Right cardiac atrium (tissue), 5 donors: ENCODE measurements at regions of chr3 and their contacts with region 1.

Region 1: GRCh38 chr3:53160660-53161449 is at the start of gene PRKCD:
- DNase-seq: peak; percentile 90 to 96 (median 95)
- ATAC-seq: peak; percentile 88 to 90
- H3K4me3 ChIP-seq: peak within 1 kb of the TSS; percentile 68
- H3K27ac ChIP-seq: peak within 1 kb of the TSS; percentile 88
- H3K4me1 ChIP-seq: peaks cover 20% of the 10 kb centered on the region
- H3K27me3 ChIP-seq: no peaks in the 10 kb centered on the region
- total RNA-seq, gene PRKCD: 26.2 to 34.4 (median 31.3) TPM

Region 2: GRCh38 chr3:53114011-53114400 is 46.8 kb before region 1 on chr3:
- intact Hi-C with region 1: loop called in 1 of 4 experiments (anchors 5 kb)
- DNase-seq: peak; percentile 73 to 89 (median 84)
- ATAC-seq: peak; percentile 75 to 85
- H3K4me3 ChIP-seq: no peak overlapping the region
- H3K27ac ChIP-seq: peak overlapping the region; percentile 86
- H3K4me1 ChIP-seq: peaks cover 2% of the 10 kb centered on the region
- H3K27me3 ChIP-seq: no peaks in the 10 kb centered on the region

Region 3: GRCh38 chr3:53921296-53921695 is 760.4 kb after region 1 on chr3:
- intact Hi-C with region 1: no loop called
- DNase-seq: no peak
- ATAC-seq: no peak
- H3K4me3 ChIP-seq: no peak overlapping the region
- H3K27ac ChIP-seq: no peak overlapping the region
- H3K4me1 ChIP-seq: no peaks in the 10 kb centered on the region
- H3K27me3 ChIP-seq: no peaks in the 10 kb centered on the region